Panc1 (cell line): ENCODE measurements at regions of chr2 and their contacts with region 1.

Region 1: GRCh38 chr2:125471963-125472362 is 1184.0 kb upstream of the GYPC start:
- DNase-seq: no peak
- ATAC-seq: peak; percentile 86
- H3K4me3 ChIP-seq: peak overlapping the region in 1 of 2 experiments; percentile 26; a peak in 1 of 4 replicates
- H3K27ac ChIP-seq: no peak overlapping the region
- H3K4me1 ChIP-seq: no peaks in the 10 kb centered on the region
- H3K27me3 ChIP-seq: no peaks in the 10 kb centered on the region
- CTCF ChIP-seq: peak; percentile 76

Region 2: DNA sequence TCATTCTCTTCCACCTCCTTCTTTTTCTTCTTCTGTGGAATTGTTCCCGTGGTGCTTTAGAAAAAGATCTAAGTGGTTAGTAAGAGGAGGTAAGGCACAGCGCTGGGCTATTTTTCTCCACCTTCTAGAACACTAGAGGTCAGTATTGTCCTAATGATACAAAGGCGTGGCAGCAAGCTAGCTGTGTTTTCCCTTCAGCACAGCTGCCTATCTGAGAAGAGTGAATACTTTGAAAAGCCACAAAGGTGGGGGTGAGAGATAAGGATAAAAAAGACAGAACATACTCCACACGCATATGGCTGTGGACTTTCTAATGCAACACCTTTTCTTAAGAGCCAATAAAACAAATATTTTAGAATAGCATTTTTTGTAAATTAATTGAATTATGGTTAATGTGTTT is 1444.8 kb before region 1 on chr2:
- CTCF ChIA-PET with region 1: no interaction called
- POLR2A ChIA-PET with region 1: no interaction called
- in situ Hi-C with region 1: no loop called
- intact Hi-C with region 1: loop called (anchors 10 kb)
- DNase-seq: peak; percentile 33
- ATAC-seq: peak; percentile 91
- H3K4me3 ChIP-seq: no peak overlapping the region
- H3K27ac ChIP-seq: no peak overlapping the region
- H3K4me1 ChIP-seq: no peaks in the 10 kb centered on the region
- H3K27me3 ChIP-seq: no peaks in the 10 kb centered on the region
- CTCF ChIP-seq: peak; percentile 75

Region 3: GRCh38 chr2:124804014-124804940 is 667.7 kb before region 1 on chr2:
- CTCF ChIA-PET with region 1: no interaction called
- POLR2A ChIA-PET with region 1: no interaction called
- in situ Hi-C with region 1: no loop called
- intact Hi-C with region 1: loop called (anchors 5 kb)
- DNase-seq: peak; percentile 27
- ATAC-seq: no peak
- H3K4me3 ChIP-seq: no peak overlapping the region
- H3K27ac ChIP-seq: no peak overlapping the region; the same call in 1 of the 2 replicates
- H3K4me1 ChIP-seq: no peaks in the 10 kb centered on the region
- H3K27me3 ChIP-seq: no peaks in the 10 kb centered on the region
- CTCF ChIP-seq: peak; percentile 79